MCF 10A (cell line): ENCODE measurements at regions of chr3 and their contacts with region 1.

Region 1: DNA sequence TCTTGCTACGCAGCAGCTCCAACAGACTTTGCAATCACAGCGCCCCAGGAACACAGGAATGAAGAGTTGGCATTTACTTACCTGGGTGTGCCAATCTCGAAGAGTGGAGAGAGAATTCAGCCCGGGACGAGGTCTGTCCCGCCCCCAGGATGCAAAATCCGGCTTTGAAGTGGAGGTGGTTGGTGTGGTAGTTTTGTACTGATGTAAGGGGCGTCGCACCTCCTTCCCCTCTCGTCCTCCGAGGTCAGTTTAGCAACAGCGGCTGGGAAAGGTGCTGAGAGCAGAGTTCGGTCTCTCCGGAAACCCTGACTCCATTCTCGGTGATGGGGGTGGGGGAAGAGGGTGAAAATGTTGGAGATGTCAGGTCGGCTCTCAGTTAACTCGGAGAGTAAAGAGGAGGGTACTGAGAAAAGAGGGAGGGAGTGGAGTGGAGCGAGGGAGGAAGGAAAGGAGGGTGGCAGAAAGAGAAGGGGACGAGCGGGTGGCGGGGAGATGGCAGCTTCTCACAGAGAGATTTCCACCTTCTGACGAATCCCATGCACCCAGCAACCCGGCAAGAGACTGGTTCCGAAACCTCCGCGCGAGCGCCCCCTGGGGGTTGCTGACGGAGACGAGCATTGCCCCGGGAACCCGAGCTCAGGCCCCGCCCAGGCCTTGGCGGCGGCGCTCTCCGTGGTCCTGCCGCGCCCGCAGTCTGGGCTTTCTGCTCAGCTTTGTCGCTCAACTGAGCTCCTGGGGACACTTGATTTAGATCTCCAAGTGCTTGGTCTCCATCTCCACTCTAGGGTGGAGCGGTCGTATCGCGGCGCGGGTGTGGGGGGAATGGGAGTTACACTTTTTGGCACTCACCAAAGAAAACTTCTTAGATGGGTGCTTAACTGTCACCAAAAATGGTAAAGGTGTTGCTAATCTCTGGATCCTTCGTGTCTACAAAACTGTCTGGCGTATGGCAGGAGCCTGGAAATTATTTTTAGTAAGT is at the start of gene CPNE4:
- DNase-seq: peak; percentile 87
- H3K4me3 Mint-ChIP-seq: peak within 1 kb of the TSS; percentile 73
- H3K27ac Mint-ChIP-seq: no peak within 1 kb of the TSS
- H3K4me1 Mint-ChIP-seq: peaks cover 10% of the 10 kb centered on the region
- H3K27me3 Mint-ChIP-seq: peaks cover 44% of the 10 kb centered on the region
- CTCF ChIP-seq: peak; percentile 91
- total RNA-seq, gene CPNE4: not detected in 2 replicates

Region 2: DNA sequence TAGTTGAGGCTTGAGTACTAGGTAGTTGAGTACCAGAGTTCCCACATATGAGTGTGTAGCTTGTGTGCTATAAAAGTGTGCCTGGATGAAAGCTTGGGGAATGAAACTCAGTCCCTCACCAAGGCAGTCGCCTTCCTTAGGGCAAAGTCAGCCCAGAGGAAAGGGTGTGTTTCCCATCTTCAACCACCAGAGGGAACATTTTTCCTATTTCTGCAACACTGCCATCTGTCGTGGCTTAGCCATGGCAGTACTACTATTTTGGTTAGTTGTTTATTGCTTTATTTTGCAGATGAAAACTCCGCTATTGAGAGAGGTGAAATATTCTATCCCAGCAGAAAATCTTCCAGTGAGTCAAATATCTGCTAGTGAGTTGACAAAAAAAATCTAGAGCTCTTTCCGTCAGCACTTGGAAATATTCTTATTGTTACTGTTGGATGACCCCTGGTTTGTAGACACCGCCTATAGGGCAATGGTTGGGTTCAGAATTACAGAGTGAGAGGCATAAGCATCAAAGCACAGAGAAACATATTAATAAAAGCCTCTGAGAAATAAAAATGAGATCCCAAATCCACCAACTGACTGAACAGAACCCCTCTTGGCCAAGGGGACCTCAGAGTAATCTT is 239.9 kb before region 1 on chr3:
- CTCF ChIA-PET with region 1: interaction called, 104 read pairs
- POLR2A ChIA-PET with region 1: no interaction called
- intact Hi-C with region 1: loop called (anchors 1 kb)
- DNase-seq: peak; percentile 57
- H3K4me3 Mint-ChIP-seq: no peak overlapping the region
- H3K27ac Mint-ChIP-seq: no peak overlapping the region
- H3K4me1 Mint-ChIP-seq: no peaks in the 10 kb centered on the region
- H3K27me3 Mint-ChIP-seq: peaks cover 14% of the 10 kb centered on the region
- CTCF ChIP-seq: peak; percentile 77

Region 3: GRCh38 chr3:132057909-132058308 is 23.1 kb after region 1 on chr3:
- CTCF ChIA-PET with region 1: interaction called, 11 read pairs
- POLR2A ChIA-PET with region 1: no interaction called
- intact Hi-C with region 1: no loop called
- DNase-seq: no peak
- H3K4me3 Mint-ChIP-seq: no peak overlapping the region
- H3K27ac Mint-ChIP-seq: no peak overlapping the region
- H3K4me1 Mint-ChIP-seq: peaks cover 5% of the 10 kb centered on the region
- H3K27me3 Mint-ChIP-seq: no peaks in the 10 kb centered on the region
- CTCF ChIP-seq: no peak

Region 4: DNA sequence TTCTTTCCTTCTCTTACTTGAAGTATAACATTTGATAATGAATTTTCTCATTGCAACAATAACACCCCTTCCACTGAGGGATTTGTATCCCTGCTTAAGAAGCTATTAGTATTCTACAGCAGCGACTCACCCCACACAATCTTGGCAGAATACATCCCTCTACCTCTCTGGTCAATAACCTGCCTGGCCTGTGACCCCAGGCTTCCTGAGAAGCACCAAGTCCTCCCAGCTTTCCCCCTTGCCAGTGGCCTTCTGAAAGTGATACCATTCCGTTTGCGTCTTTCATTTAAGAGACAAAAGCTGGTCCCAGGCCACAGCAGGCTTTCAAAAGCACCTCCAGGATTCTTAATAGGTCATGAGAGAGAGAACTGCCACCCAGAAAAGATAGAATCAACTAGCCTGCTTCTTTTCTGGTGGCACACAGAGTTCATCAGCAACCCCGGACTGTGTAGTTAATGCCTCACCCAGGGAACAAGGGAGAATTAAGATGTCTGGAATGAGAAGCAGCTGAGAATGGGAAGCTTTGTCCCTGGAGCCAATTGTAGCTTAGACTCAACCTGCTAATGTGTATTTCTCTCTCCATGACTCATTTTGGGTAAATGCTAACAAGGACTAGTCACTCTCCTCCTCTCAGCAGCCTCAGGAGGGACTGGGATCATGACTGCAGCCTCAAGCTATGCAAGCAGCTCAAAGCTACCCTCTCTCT is 101.0 kb after region 1 on chr3:
- CTCF ChIA-PET with region 1: interaction called, 20 read pairs
- POLR2A ChIA-PET with region 1: interaction called, 3 read pairs
- intact Hi-C with region 1: no loop called
- DNase-seq: peak; percentile 93
- H3K4me3 Mint-ChIP-seq: peak overlapping the region; percentile 43
- H3K27ac Mint-ChIP-seq: peak overlapping the region; percentile 90
- H3K4me1 Mint-ChIP-seq: peaks cover 24% of the 10 kb centered on the region
- H3K27me3 Mint-ChIP-seq: no peaks in the 10 kb centered on the region
- CTCF ChIP-seq: no peak

Region 5: GRCh38 chr3:132196113-132196512 is 161.3 kb after region 1 on chr3:
- CTCF ChIA-PET with region 1: interaction called, 24 read pairs
- POLR2A ChIA-PET with region 1: no interaction called
- intact Hi-C with region 1: no loop called
- DNase-seq: peak; percentile 47
- H3K4me3 Mint-ChIP-seq: no peak overlapping the region
- H3K27ac Mint-ChIP-seq: peak overlapping the region; percentile 14
- H3K4me1 Mint-ChIP-seq: peaks cover 11% of the 10 kb centered on the region
- H3K27me3 Mint-ChIP-seq: no peaks in the 10 kb centered on the region
- CTCF ChIP-seq: no peak

Region 6: DNA sequence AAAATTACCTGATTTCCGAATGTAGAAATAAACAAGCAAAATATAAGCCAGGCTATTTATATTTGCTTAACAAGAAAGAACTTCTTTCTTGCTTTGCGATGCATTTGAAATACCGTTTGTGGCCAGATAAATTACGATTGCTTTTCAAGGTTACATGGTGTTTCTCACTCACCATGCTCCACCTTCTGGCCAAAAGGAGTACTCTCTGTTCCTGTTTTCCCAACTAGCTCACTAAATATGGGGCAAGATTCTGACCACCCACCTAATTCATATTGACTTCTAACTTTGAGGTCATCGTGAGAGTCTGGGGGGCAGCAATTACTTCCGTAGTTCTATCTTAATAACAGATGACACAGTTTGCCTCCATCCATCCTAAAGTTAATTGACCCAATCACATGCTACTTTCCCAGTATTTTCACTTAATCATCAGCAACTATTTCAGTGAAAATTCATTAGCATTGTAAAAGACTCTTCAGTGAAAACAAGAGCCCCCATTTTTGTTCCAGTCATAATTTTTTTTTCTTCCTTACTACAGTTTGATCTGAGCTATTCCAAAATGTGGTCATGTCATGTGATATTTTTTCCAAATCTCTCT is 308.3 kb after region 1 on chr3:
- CTCF ChIA-PET with region 1: interaction called, 28 read pairs
- POLR2A ChIA-PET with region 1: interaction called, 3 read pairs
- intact Hi-C with region 1: loop called (anchors 5 kb)
- DNase-seq: peak; percentile 69
- H3K4me3 Mint-ChIP-seq: no peak overlapping the region
- H3K27ac Mint-ChIP-seq: no peak overlapping the region
- H3K4me1 Mint-ChIP-seq: peaks cover 19% of the 10 kb centered on the region
- H3K27me3 Mint-ChIP-seq: no peaks in the 10 kb centered on the region
- CTCF ChIP-seq: peak; percentile 85

Region 7: GRCh38 chr3:132486086-132486485 is 451.3 kb after region 1 on chr3:
- CTCF ChIA-PET with region 1: no interaction called
- POLR2A ChIA-PET with region 1: no interaction called
- intact Hi-C with region 1: no loop called
- DNase-seq: peak; percentile 44
- H3K4me3 Mint-ChIP-seq: no peak overlapping the region
- H3K27ac Mint-ChIP-seq: no peak overlapping the region
- H3K4me1 Mint-ChIP-seq: peaks cover 9% of the 10 kb centered on the region
- H3K27me3 Mint-ChIP-seq: no peaks in the 10 kb centered on the region
- CTCF ChIP-seq: no peak